Panc1 (cell line): ENCODE measurements at regions of chr7 and their contacts with region 1.

Region 1: DNA sequence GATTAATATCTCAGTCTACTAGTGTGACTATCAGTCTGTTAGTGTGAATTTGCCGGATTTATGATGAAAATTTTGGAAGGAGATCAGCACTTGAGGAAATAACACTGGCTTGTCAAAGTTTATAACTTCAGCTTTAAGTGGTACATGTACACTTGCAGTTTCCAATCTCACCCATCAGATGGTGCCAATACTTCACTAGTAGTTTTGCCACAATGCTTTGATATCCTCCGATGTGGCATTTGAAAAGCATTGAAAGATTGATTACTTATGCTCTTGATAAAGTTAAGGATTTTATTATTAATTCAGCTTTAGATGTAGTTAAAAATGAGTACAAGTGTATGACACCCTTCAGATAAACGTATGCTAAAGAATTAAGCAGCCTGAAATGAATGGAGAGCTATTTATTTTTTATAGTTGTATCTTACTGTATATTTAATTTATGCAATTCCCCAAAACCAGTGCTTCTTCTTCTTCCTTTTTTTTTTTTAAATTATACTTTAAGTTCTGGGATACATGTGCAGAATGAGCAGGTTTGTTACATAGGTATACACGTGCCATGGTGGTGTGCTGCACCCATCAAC is 98.2 kb downstream of the ANLN start:
- DNase-seq: peak; percentile 88
- ATAC-seq: peak; percentile 91
- H3K4me3 ChIP-seq: no peak overlapping the region
- H3K27ac ChIP-seq: peak overlapping the region; percentile 57; the same call in 1 of the 2 replicates
- H3K4me1 ChIP-seq: no peaks in the 10 kb centered on the region
- H3K27me3 ChIP-seq: no peaks in the 10 kb centered on the region
- CTCF ChIP-seq: peak; percentile 82; the same call in 1 of the 2 replicates

Region 2: DNA sequence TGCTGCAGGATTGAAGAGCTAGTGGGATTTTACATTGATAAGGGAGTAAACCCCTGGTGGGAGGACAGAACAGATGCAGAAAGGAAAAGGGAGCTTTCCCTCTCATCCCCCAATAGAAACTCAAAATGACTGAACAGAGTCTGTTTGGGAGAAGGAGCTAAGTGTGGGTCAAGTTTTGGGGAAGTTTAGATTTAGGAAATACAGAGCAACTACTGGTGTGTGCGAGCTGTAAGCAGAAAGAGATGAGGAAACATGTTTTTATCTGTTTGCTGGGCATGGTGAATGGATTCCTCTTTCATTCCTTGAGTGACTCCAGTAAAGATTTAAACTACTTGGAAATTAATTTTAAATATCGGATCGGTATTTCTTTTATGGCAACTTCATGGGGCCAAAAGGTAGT is 103.8 kb after region 1 on chr7:
- CTCF ChIA-PET with region 1: no interaction called
- POLR2A ChIA-PET with region 1: no interaction called
- in situ Hi-C with region 1: no loop called
- intact Hi-C with region 1: no loop called
- DNase-seq: no peak
- ATAC-seq: no peak
- H3K4me3 ChIP-seq: no peak overlapping the region
- H3K27ac ChIP-seq: no peak overlapping the region
- H3K4me1 ChIP-seq: no peaks in the 10 kb centered on the region
- H3K27me3 ChIP-seq: no peaks in the 10 kb centered on the region
- CTCF ChIP-seq: no peak

Region 3: DNA sequence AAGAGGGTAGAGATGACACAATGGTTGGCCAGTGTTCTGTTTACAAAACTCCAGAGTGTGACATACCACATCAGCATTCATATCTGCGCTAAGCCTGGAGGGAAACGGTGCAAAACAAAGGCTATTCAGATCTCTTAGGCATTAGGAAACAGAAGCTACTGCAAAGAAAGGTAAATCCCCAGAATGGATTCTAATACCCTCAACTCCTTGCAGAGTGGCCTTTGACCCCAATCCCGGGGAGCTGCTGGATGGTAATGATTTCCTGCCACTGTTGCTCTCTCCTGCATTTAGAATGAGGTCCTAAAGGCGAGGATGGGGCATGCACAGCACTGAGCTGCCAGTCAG is 171.3 kb after region 1 on chr7:
- CTCF ChIA-PET with region 1: interaction called, 4 read pairs
- POLR2A ChIA-PET with region 1: no interaction called
- in situ Hi-C with region 1: no loop called
- intact Hi-C with region 1: loop called (anchors 5 kb)
- DNase-seq: peak; percentile 98
- ATAC-seq: peak; percentile 95
- H3K4me3 ChIP-seq: peak overlapping the region; percentile 2 to 28; a peak in 3 of 4 replicates
- H3K27ac ChIP-seq: peak overlapping the region; percentile 99
- H3K4me1 ChIP-seq: peaks cover 34% of the 10 kb centered on the region
- H3K27me3 ChIP-seq: no peaks in the 10 kb centered on the region
- CTCF ChIP-seq: no peak

Region 4: DNA sequence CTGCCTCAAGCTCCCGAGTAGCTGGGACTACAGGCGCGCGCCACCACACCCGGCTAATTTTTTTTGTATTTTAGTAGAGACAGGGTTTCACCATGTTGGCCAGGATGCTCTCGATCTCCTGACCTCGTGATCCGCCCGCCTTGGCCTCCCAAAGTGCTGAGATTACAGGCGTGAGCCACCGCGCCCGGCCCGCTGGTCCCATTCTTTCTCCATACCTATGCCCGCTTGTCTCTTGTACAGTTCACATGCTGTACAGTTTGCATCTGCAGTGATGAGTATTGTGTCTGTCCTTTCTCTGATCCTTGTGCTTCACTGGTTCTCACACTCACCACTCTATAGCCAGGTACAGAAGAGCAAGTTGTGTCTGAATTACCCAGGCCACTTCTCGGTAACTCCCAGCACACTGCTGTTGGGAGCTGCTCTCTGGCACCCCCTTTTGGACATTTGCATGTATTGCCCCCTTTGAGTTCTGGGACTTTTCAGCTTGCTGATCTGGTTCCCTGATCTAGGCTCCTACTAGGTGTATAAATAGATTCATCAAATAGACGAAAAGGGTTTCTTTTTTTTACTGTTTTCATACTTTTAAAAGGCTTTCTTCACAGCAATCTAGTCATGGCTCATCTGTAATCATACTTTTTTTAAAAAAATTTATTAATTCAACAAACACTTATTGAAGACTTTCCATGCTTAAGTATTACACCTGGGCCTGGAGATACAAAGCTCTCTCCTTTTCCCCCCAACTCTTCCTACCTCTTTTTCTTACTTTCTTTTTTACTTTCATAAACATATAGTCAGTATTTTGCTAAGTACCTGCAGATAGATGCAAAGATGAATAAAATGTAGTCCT is 183.0 kb after region 1 on chr7:
- CTCF ChIA-PET with region 1: interaction called, 5 read pairs
- POLR2A ChIA-PET with region 1: no interaction called
- in situ Hi-C with region 1: no loop called
- intact Hi-C with region 1: loop called (anchors 5 kb)
- DNase-seq: peak; percentile 41
- ATAC-seq: peak; percentile 80
- H3K4me3 ChIP-seq: no peak overlapping the region
- H3K27ac ChIP-seq: no peak overlapping the region
- H3K4me1 ChIP-seq: no peaks in the 10 kb centered on the region
- H3K27me3 ChIP-seq: no peaks in the 10 kb centered on the region
- CTCF ChIP-seq: peak; percentile 92

Region 5: DNA sequence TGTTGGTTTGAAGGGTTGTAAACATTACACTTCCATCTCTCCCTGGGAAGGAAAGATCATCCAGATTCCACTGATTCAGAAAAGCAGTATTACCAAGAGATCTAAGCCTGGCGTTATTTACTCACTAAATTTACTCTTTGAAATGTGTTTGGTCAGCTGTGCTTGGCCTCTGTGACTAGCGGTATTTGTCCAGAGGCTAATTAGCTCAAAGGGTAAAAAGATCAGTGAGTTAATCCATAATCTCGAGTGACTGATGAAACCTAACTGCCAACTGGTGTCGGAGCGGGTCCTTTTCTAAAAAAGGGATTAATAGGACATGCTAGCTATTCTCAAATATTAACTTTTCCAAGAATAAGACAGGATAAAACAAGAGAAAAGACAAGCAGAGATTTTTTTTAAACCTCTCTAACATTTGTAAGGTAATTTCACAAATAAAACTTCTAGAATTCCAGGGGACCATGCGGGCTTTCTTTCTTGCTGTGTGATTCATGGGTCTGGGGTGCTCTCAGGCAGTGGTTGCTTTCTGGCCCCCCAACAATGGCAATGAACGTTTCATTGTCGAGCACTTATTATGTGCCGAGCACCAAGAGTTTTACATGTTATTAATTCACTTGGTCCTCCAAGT is 483.8 kb after region 1 on chr7:
- CTCF ChIA-PET with region 1: no interaction called
- POLR2A ChIA-PET with region 1: no interaction called
- in situ Hi-C with region 1: no loop called
- intact Hi-C with region 1: loop called (anchors 5 kb)
- DNase-seq: no peak
- ATAC-seq: peak; percentile 56; the same call in 1 of the 2 replicates
- H3K4me3 ChIP-seq: no peak overlapping the region
- H3K27ac ChIP-seq: peak overlapping the region; percentile 17; the same call in 1 of the 2 replicates
- H3K4me1 ChIP-seq: no peaks in the 10 kb centered on the region
- H3K27me3 ChIP-seq: no peaks in the 10 kb centered on the region
- CTCF ChIP-seq: no peak

Region 6: GRCh38 chr7:37201003-37201875 is 713.4 kb after region 1 on chr7:
- CTCF ChIA-PET with region 1: interaction called, 11 read pairs
- POLR2A ChIA-PET with region 1: no interaction called
- in situ Hi-C with region 1: loop called (anchors 25 kb)
- intact Hi-C with region 1: loop called (anchors 1 kb)
- DNase-seq: no peak
- ATAC-seq: peak; percentile 86
- H3K4me3 ChIP-seq: no peak overlapping the region
- H3K27ac ChIP-seq: peak overlapping the region; percentile 36
- H3K4me1 ChIP-seq: peaks cover 19% of the 10 kb centered on the region
- H3K27me3 ChIP-seq: no peaks in the 10 kb centered on the region
- CTCF ChIP-seq: peak; percentile 94